CD4-positive, alpha-beta T cell (primary cell): ENCODE measurements at regions of chr12 and their contacts with region 1.

Region 1: DNA sequence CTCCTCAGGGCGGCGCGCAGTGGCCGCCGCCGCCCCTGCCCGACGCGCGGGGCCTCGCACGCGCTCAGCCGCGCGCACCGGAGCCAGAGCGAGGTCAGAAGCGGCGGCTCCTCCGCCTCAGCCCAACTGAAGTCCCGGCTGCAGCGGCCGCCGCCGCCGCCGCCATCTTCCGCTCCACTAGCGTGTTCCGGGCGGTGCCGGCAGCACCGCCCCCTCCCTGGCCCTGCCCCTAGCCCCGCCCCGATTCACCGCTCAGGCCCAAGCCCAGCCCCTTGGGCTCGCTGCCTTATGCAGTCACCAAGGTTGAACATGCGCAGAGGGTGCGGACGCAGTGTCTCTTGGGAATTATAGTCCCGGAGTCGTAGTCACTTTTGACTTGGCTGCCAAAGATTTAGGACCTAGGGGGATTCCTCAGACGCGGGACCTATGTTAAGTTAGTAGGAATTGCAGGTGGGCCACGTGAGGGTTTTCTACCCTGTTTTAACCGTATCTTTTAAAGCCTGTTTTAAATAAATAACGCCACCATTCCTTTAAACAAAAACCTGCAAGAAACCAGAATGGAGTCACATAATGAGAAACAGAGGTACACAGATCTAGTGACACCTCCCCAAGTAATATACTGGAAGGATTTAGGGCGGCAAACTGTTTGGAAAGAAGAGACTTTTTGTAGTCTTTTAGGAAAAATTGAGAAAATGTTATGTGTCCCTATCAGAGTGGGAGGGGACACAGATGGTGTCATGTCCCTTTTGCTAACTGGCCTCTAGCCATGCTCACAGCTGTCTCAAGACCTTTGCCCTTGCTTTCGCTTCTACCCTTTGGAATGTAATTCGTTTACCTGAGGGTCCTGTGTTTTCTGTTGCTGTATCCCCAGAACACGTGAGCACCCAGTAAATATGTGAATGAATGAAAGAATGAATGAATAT is at the start of gene PPTC7:
- DNase-seq: peak; percentile 96 to 98 (median 97)
- ATAC-seq: peak; percentile 92
- H3K4me3 ChIP-seq: peak within 1 kb of the TSS; percentile 95
- H3K4me3 Mint-ChIP-seq: peak within 1 kb of the TSS; percentile 97
- H3K27ac ChIP-seq: peak within 1 kb of the TSS; percentile 64 to 91
- H3K27ac Mint-ChIP-seq: peak within 1 kb of the TSS; percentile 96
- H3K4me1 ChIP-seq: peaks cover 67% of the 10 kb centered on the region
- H3K4me1 Mint-ChIP-seq: peaks cover 68% of the 10 kb centered on the region
- H3K27me3 ChIP-seq: no peaks in the 10 kb centered on the region
- H3K27me3 Mint-ChIP-seq: no peaks in the 10 kb centered on the region
- CTCF ChIP-seq: no peak
- total RNA-seq, gene PPTC7: 53.8 to 54.8 TPM

Region 2: DNA sequence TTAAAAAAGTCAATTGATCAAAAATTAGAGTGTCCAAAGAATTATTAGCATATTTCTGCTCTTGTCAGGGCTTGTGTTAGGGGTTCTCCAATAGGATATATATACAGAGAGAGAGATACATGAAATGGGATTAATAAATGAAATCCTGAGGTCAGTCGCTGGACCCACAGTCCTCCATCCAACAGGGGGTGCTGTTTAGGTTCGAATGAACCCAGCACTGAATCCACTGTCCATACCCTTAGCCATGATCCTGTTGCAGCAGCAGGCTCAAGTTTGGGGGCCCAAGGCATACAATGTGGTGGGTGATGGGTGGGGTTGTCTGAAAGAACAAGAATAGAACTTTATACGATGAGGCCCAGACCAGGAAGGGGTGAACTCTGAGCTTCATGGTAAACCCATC is 1236.5 kb before region 1 on chr12:
- CTCF ChIA-PET with region 1: no interaction called
- POLR2A ChIA-PET with region 1: no interaction called
- intact Hi-C with region 1: no loop called
- DNase-seq: no peak
- ATAC-seq: no peak
- H3K4me3 ChIP-seq: no peak overlapping the region
- H3K4me3 Mint-ChIP-seq: no peak overlapping the region
- H3K27ac ChIP-seq: no peak overlapping the region
- H3K27ac Mint-ChIP-seq: no peak overlapping the region
- H3K4me1 ChIP-seq: no peaks in the 10 kb centered on the region
- H3K4me1 Mint-ChIP-seq: no peaks in the 10 kb centered on the region
- H3K27me3 ChIP-seq: peaks cover 0 to 5% of the 10 kb centered on the region in 2 experiments
- H3K27me3 Mint-ChIP-seq: peaks cover 33% of the 10 kb centered on the region
- CTCF ChIP-seq: no peak

Region 3: DNA sequence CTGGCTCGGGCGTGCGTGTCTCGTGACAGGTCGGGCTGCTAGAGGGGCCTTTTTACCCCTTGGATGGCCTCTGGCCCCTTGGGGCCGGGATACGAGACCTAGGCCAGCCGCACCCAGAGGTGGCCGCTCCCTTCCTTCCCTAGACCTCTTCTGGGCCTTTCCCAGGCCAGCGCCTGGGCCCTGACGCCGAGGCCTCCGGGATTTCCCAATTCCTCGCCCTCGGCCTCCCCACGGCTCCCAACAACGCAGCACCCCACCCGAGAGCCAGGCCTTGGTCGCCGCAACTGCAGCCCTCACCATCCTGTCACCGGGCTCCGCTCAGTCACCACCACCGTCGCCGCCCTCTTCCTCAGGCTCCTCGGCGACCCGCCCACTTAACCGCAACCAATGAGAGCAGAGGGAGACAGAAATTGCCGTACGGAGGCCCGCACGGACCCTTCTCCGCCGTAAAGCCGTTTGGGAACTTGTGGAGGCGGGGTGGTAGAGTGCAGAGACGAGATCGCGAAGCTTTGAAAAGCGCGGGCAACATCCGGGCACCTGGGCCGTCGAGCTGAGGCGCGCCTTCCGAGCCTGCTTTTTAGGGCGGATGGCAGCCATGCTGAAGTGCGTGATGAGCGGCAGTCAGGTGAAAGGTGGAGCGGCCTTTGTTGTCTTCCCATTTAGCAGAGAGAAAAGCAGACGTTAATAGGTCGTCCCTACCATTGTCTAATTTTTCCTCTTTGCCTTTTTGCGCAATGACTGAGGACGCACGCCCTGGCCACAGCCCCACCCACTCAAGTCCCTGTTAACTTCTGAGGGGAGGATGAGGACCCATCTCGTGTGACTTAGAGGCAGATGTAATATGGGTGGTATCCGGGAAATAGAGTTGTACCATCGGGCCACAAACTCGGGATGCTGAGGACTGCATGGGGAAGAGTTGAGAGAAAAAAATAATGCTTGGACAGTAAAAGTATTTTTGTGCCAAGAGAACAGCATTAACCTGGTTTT is 81.4 kb before region 1 on chr12 and contains the starts of genes RAD9B and VPS29:
- CTCF ChIA-PET with region 1: interaction called, 3 read pairs
- POLR2A ChIA-PET with region 1: interaction called, 11 read pairs
- intact Hi-C with region 1: loop called (anchors 5 kb)
- DNase-seq: peak; percentile 97 to 100 (median 98)
- ATAC-seq: peak; percentile 92
- H3K4me3 ChIP-seq: peak within 1 kb of the TSS; percentile 96
- H3K4me3 Mint-ChIP-seq: peak within 1 kb of the TSS; percentile 98
- H3K27ac ChIP-seq: peak within 1 kb of the TSS; percentile 90 to 93
- H3K27ac Mint-ChIP-seq: peak within 1 kb of the TSS; percentile 90
- H3K4me1 ChIP-seq: peaks cover 24% of the 10 kb centered on the region
- H3K4me1 Mint-ChIP-seq: peaks cover 39% of the 10 kb centered on the region
- H3K27me3 ChIP-seq: no peaks in the 10 kb centered on the region
- H3K27me3 Mint-ChIP-seq: no peaks in the 10 kb centered on the region
- CTCF ChIP-seq: no peak
- total RNA-seq, gene RAD9B: 0.31 to 0.63 TPM
- total RNA-seq, gene VPS29: 62.5 to 64.9 TPM

Region 4: GRCh38 chr12:110555577-110556406 is 27.6 kb before region 1 on chr12:
- CTCF ChIA-PET with region 1: interaction called, 17 read pairs
- POLR2A ChIA-PET with region 1: no interaction called
- intact Hi-C with region 1: loop called in 1 of 2 experiments (anchors 2 kb)
- DNase-seq: no peak
- ATAC-seq: no peak
- H3K4me3 ChIP-seq: no peak overlapping the region
- H3K4me3 Mint-ChIP-seq: no peak overlapping the region
- H3K27ac ChIP-seq: no peak overlapping the region
- H3K27ac Mint-ChIP-seq: peak overlapping the region; percentile 25
- H3K4me1 ChIP-seq: peaks cover 35% of the 10 kb centered on the region
- H3K4me1 Mint-ChIP-seq: peaks cover 60% of the 10 kb centered on the region
- H3K27me3 ChIP-seq: no peaks in the 10 kb centered on the region
- H3K27me3 Mint-ChIP-seq: no peaks in the 10 kb centered on the region
- CTCF ChIP-seq: no peak

Region 5: DNA sequence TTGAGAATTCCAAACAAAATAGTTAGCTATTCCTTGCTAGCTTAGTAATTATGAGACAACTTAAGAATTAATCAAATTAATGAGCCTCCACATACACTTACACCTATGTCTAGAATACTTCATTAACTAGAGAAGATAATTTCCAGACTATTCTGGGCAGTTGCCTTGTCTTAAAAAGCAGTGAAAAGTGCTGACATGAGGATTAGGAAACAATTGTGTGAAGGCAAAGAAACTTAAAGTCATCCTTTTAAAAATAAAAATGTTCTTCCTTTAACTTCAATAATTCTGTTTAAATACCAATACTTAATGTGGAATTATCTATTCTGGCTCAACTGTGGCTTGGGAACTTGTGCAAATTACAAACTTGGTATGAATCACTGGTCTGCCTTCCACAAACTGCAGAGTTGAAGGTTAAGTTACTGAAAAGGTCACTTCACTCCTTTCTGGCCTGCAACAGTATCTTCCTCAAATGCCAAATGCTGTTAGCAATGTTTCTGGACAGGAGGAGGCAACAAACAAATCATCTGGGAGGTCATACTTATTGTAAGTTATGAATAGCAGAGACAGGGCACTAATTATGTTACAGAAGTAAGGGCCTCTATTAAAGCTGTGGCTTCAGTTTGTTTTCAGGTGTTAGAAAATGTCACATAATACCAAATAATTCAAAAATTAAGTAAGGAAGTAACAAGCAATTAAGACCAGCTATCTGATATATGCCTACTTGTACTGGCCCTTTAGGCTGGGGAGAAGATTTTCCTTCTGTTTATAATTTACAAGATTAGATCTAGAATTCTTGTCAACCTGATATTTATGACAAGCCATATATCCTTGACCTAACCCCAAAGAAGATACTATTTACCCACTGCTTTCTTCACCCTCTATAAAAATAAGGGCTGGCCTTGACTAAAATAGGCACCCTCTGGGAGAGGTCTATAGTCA is 19.4 kb before region 1 on chr12:
- CTCF ChIA-PET with region 1: interaction called, 4 read pairs
- POLR2A ChIA-PET with region 1: interaction called, 20 read pairs
- intact Hi-C with region 1: loop called in 1 of 2 experiments (anchors 2 kb)
- DNase-seq: peak in 2 of 14 experiments; percentile 17 to 25
- ATAC-seq: no peak
- H3K4me3 ChIP-seq: no peak overlapping the region
- H3K4me3 Mint-ChIP-seq: peak overlapping the region; percentile 27
- H3K27ac ChIP-seq: peak overlapping the region; percentile 1 to 38
- H3K27ac Mint-ChIP-seq: peak overlapping the region; percentile 97
- H3K4me1 ChIP-seq: peaks cover 60% of the 10 kb centered on the region
- H3K4me1 Mint-ChIP-seq: peaks cover 69% of the 10 kb centered on the region
- H3K27me3 ChIP-seq: no peaks in the 10 kb centered on the region
- H3K27me3 Mint-ChIP-seq: no peaks in the 10 kb centered on the region
- CTCF ChIP-seq: no peak